H1 (cell line): ENCODE measurements at regions of chr2 and their contacts with region 1.

Region 1: DNA sequence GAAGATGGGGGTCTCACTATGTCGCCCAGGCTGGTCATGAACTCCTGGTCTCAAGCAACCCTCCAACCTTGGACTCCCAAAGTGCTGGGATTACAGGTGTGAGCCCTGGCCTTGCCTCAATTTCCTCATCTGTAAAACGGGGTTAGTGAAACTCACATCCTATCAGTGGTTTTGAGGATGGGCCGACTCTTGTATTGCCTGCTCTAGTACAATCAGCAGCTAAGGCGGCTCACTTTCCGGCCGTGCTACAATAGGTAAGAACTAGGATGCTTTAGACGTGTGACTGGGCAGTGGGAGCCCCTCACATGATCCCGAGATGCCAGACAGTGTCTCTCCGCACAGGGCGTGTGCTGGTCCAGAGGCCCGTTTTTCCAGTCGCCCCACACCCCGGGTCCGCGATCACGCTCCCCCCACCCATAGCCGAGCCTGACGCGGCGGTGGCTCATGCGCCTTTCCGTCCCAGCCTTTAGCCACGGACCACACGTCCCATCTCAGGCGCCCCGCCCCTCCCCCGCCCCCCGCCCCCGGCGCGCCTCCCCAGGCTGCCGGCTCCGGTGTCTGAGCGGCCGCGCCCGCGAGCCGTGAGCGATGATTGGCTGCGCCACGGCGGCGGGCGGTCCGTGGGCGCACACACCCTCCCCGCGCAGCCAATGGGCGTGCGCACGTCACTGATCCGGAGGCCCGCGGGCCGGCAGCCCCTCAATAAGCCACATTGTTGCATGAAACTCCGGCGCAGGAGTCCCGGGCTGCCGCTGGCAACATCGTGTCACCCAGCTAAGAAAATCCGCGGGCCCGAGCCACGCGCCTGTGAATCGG is at the start of gene HK2:
- DNase-seq: peak; percentile 65 to 79
- H3K4me3 ChIP-seq: peak within 1 kb of the TSS; percentile 87 to 91 (median 88)
- H3K27ac ChIP-seq: peak within 1 kb of the TSS; percentile 96
- H3K4me1 ChIP-seq: peaks cover 7 to 21% (median 13%) of the 10 kb centered on the region in 4 experiments
- H3K27me3 ChIP-seq: no peaks in the 10 kb centered on the region
- CTCF ChIP-seq: no peak
- EP300 ChIP-seq: no peak
- POLR2A ChIP-seq: 0 out of 3 replicates have a peak, but pooled peaks of 1 of the 2 experiments have one; percentile 42
- RAD21 ChIP-seq: no peak
- total RNA-seq, gene HK2: 61.0 and 61.9 TPM in 2 replicates

Region 2: DNA sequence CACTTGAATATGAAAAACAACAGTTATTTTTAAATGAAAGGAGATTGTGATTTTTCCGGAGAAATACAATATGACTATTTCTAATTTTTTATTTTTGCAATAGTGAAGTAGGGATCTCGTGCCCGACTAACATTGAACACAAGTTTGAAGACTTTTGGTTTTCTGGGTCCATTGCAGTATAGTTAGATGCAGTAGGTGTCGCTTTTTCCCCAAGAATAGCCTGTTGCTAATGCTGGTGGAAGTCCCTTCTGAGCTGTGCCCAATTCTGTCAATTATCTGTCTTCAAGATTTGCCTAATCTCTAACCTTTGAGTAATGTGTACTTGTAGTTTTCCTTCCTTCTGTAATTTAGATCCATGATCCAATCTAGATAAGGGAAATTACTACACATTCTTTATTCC is 143.1 kb before region 1 on chr2:
- CTCF ChIA-PET with region 1: interaction called, 11 read pairs
- POLR2A ChIA-PET with region 1: interaction called, 5 read pairs
- DNase-seq: no peak
- H3K4me3 ChIP-seq: no peak overlapping the region
- H3K27ac ChIP-seq: no peak overlapping the region
- H3K4me1 ChIP-seq: no peaks in the 10 kb centered on the region
- H3K27me3 ChIP-seq: no peaks in the 10 kb centered on the region
- CTCF ChIP-seq: peak in 2 of 3 experiments; percentile 76 to 82; a peak in 3 of 4 replicates
- EP300 ChIP-seq: no peak
- POLR2A ChIP-seq: no peak
- RAD21 ChIP-seq: peak; percentile 97 to 98

Region 3: GRCh38 chr2:74740389-74741075 is 93.1 kb before region 1 on chr2:
- CTCF ChIA-PET with region 1: interaction called, 11 read pairs
- POLR2A ChIA-PET with region 1: interaction called, 16 read pairs
- DNase-seq: peak in 1 of 2 experiments; percentile 43
- H3K4me3 ChIP-seq: no peak overlapping the region
- H3K27ac ChIP-seq: no peak overlapping the region
- H3K4me1 ChIP-seq: peaks cover 0 to 8% (median 1%) of the 10 kb centered on the region in 4 experiments; a peak in 2 of 7 replicates
- H3K27me3 ChIP-seq: no peaks in the 10 kb centered on the region
- CTCF ChIP-seq: no peak
- EP300 ChIP-seq: no peak
- POLR2A ChIP-seq: no peak
- RAD21 ChIP-seq: peak in 1 of 2 experiments; percentile 10; a peak in 1 of 4 replicates

Region 4: DNA sequence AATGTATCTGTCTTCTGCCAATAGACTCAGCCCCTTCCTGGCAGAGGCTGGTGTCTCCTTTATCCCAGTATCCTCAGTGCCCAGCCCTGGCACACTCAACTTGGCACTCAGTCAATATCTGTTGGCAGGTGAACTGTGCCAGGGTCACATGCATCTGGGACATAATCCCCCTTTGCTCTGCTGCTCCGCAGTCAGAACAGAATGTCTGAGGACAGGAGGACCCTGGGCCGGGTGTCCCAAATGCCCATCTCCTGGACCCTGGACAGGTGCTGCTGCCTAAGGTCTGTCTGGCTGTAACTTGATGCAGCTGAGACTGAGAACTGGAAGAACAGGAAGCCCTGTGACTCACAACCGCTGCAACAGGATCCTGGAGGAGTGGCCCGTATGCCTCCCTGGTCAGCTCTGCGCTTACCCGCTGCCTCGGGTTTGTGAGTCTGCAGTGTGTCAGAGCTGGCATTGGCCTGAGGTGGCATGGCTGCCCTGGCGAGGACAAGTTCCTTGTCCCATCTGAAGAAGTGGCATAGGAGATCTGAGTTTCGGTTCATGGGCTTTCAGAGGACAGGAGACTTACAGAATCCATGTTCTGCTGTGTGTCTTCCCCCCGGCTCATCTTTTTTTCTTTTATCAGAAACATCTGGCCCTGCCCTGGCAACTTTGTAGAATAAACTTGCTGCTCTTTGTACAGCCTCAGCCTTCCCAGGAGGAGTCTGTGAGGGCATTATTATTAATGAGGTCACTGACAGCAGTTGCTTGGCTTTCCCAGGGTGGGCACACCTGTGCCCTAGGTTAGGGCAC is 11.8 kb after region 1 on chr2:
- CTCF ChIA-PET with region 1: interaction called, 117 read pairs
- POLR2A ChIA-PET with region 1: interaction called, 95 read pairs
- DNase-seq: peak in 1 of 2 experiments; percentile 56
- H3K4me3 ChIP-seq: no peak overlapping the region
- H3K27ac ChIP-seq: no peak overlapping the region
- H3K4me1 ChIP-seq: peaks cover 9 to 57% (median 30%) of the 10 kb centered on the region in 4 experiments
- H3K27me3 ChIP-seq: no peaks in the 10 kb centered on the region
- CTCF ChIP-seq: no peak
- EP300 ChIP-seq: no peak
- POLR2A ChIP-seq: no peak
- RAD21 ChIP-seq: no peak

Region 5: GRCh38 chr2:74864846-74865722 is 31.5 kb after region 1 on chr2:
- CTCF ChIA-PET with region 1: interaction called, 13 read pairs
- POLR2A ChIA-PET with region 1: interaction called, 35 read pairs
- DNase-seq: no peak
- H3K4me3 ChIP-seq: no peak overlapping the region
- H3K27ac ChIP-seq: peak overlapping the region; percentile 52; the same call in 1 of the 2 replicates
- H3K4me1 ChIP-seq: peaks cover 0 to 11% (median 7%) of the 10 kb centered on the region in 4 experiments
- H3K27me3 ChIP-seq: no peaks in the 10 kb centered on the region
- CTCF ChIP-seq: peak in 2 of 3 experiments; percentile 3 to 48; a peak in 1 of 4 replicates
- EP300 ChIP-seq: no peak
- POLR2A ChIP-seq: no peak
- RAD21 ChIP-seq: peak in 1 of 2 experiments; percentile 23; a peak in 3 of 4 replicates

Region 6: DNA sequence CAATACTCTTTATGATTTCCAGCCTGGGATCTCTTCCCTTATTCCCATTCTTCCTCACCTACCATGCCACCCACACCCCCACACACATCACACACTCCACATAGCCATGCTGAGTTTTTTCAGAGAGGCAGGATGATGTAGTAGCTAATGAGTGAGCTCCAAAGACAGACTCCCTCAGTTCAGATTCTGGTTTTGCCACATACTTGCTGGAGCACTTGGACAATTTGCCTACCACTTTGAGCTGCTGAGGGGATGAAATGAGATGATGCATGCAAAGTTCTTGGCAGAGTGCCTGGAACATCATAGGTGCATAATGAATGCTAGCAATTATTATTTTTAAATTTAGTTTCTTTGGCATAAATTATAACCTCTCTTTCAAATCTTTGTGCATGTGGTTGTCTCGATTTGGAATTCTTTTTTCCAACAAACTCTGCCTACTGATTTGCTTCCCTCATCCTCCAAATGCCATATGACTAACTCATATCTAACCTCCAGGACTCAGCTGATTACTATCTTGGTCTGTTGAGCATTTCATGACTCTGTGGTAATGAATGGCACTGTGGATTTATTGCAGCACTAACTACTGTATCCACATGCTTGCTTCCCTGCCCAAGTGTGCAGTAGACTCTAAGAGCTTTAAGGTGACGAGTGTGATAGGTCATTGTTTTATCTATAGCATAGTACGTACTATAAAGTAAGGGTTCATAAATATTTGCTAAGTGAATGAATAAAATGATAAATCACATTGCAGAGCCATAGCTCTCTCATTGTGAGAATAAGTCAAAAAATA is 266.6 kb after region 1 on chr2:
- CTCF ChIA-PET with region 1: no interaction called
- POLR2A ChIA-PET with region 1: no interaction called
- DNase-seq: no peak
- H3K4me3 ChIP-seq: no peak overlapping the region
- H3K27ac ChIP-seq: no peak overlapping the region
- H3K4me1 ChIP-seq: no peaks in the 10 kb centered on the region
- H3K27me3 ChIP-seq: no peaks in the 10 kb centered on the region
- CTCF ChIP-seq: no peak
- EP300 ChIP-seq: no peak
- POLR2A ChIP-seq: no peak
- RAD21 ChIP-seq: no peak